ENCODE measurements at regions of chr13 and their contacts with region 1.

Region 1: GRCh38 chr13:49225223-49226090 is 5.3 kb downstream of the MLNR start:
- DNase-seq: no peak
- H3K4me3 ChIP-seq: no peak overlapping the region
- H3K27ac ChIP-seq: no peak overlapping the region
- H3K4me1 ChIP-seq: peaks cover 0 to 1% of the 10 kb centered on the region in 2 experiments; a peak in 1 of 4 replicates
- H3K27me3 ChIP-seq: peaks cover 33% of the 10 kb centered on the region
- CTCF ChIP-seq: no peak
- EP300 ChIP-seq: no peak
- RAD21 ChIP-seq: no peak

Region 2: GRCh38 chr13:49240017-49240416 is 14.6 kb after region 1 on chr13:
- CTCF ChIA-PET with region 1: interaction called, 13 read pairs
- POLR2A ChIA-PET with region 1: no interaction called
- DNase-seq: no peak
- H3K4me3 ChIP-seq: no peak overlapping the region
- H3K27ac ChIP-seq: no peak overlapping the region
- H3K4me1 ChIP-seq: no peaks in the 10 kb centered on the region
- H3K27me3 ChIP-seq: no peaks in the 10 kb centered on the region
- CTCF ChIP-seq: peak; percentile 62
- EP300 ChIP-seq: no peak
- RAD21 ChIP-seq: peak; percentile 59

Region 3: GRCh38 chr13:49356223-49356622 is 130.8 kb after region 1 on chr13:
- CTCF ChIA-PET with region 1: no interaction called
- POLR2A ChIA-PET with region 1: no interaction called
- DNase-seq: no peak
- H3K4me3 ChIP-seq: no peak overlapping the region
- H3K27ac ChIP-seq: peak overlapping the region in 1 of 2 experiments; percentile 92; a peak in 2 of 4 replicates
- H3K4me1 ChIP-seq: peaks cover 0 to 17% of the 10 kb centered on the region in 2 experiments; a peak in 2 of 4 replicates
- H3K27me3 ChIP-seq: no peaks in the 10 kb centered on the region
- CTCF ChIP-seq: no peak
- EP300 ChIP-seq: no peak
- RAD21 ChIP-seq: no peak